WTC11 (cell line): ENCODE measurements at regions of chr5 and their contacts with region 1.

Region 1: GRCh38 chr5:139774980-139775661 is 20.5 kb upstream of the PSD2 start:
- DNase-seq: peak; percentile 97
- ATAC-seq: peak; percentile 97
- H3K4me3 Mint-ChIP-seq: peak overlapping the region; percentile 34; the same call in 1 of the 2 replicates
- H3K27ac Mint-ChIP-seq: no peak overlapping the region
- H3K4me1 Mint-ChIP-seq: peaks cover 11% of the 10 kb centered on the region; the same call in 1 of the 2 replicates
- H3K27me3 Mint-ChIP-seq: peaks cover 28% of the 10 kb centered on the region
- CTCF ChIP-seq: peak; percentile 98

Region 2: GRCh38 chr5:139690064-139690802 is 84.9 kb before region 1 on chr5:
- CTCF ChIA-PET with region 1: interaction called, 15 read pairs
- POLR2A ChIA-PET with region 1: no interaction called
- DNase-seq: no peak
- ATAC-seq: peak; percentile 11
- H3K4me3 Mint-ChIP-seq: peak overlapping the region; percentile 24; the same call in 1 of the 2 replicates
- H3K27ac Mint-ChIP-seq: peak overlapping the region; percentile 19; the same call in 1 of the 2 replicates
- H3K4me1 Mint-ChIP-seq: peaks cover 63% of the 10 kb centered on the region
- H3K27me3 Mint-ChIP-seq: peaks cover 24% of the 10 kb centered on the region
- CTCF ChIP-seq: no peak

Region 3: DNA sequence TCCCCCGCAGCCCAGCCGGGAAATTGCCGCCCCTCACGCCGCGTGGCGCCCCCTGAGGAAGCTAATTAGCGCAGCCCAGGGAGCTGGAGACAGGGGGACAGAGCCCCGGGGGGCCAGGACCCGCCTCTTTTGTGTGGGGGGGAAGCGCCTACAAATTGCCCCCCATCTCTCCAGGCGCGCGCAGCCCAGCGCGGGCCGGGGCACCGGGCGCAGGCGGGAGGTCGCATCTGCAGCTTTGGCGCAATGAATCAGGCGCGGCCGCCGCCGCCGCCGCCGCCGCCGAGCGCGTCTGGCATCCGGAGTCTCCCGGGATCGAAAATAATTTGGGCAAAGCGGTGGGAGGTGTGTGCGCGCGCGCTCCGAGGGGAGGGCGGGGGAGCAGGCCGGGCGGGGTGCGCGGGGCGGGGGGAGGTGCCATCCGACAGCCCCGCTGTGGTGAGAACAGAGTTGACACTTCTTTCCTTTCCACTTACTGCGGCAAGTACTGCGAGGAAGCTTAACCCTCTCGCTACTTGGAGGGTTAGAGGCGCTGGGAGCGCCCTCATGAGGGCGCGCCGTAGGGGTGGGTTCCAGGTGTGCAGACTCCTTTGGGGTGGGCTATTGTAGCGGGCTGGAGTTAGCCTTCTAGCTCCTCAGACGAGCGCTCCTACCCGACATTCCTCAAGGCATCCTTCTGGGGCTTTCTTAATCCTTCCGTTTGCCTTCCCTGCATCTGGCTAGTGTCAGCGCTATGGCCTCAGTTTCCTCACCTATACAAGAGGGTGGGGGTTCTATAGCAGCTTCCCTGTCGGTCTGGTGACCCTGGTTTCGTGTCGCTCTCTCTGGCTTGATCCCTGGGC is 63.8 kb before region 1 on chr5:
- CTCF ChIA-PET with region 1: interaction called, 40 read pairs
- POLR2A ChIA-PET with region 1: interaction called, 3 read pairs
- DNase-seq: peak; percentile 75
- ATAC-seq: peak; percentile 10
- H3K4me3 Mint-ChIP-seq: peak overlapping the region; percentile 71
- H3K27ac Mint-ChIP-seq: peak overlapping the region; percentile 45
- H3K4me1 Mint-ChIP-seq: peaks cover 37% of the 10 kb centered on the region
- H3K27me3 Mint-ChIP-seq: peaks cover 7% of the 10 kb centered on the region
- CTCF ChIP-seq: no peak

Region 4: GRCh38 chr5:139755892-139756671 is 19.0 kb before region 1 on chr5:
- CTCF ChIA-PET with region 1: interaction called, 11 read pairs
- POLR2A ChIA-PET with region 1: no interaction called
- DNase-seq: peak; percentile 66
- ATAC-seq: peak; percentile 55
- H3K4me3 Mint-ChIP-seq: peak overlapping the region; percentile 70
- H3K27ac Mint-ChIP-seq: no peak overlapping the region
- H3K4me1 Mint-ChIP-seq: peaks cover 40% of the 10 kb centered on the region
- H3K27me3 Mint-ChIP-seq: peaks cover 91% of the 10 kb centered on the region
- CTCF ChIP-seq: no peak

Region 5: DNA sequence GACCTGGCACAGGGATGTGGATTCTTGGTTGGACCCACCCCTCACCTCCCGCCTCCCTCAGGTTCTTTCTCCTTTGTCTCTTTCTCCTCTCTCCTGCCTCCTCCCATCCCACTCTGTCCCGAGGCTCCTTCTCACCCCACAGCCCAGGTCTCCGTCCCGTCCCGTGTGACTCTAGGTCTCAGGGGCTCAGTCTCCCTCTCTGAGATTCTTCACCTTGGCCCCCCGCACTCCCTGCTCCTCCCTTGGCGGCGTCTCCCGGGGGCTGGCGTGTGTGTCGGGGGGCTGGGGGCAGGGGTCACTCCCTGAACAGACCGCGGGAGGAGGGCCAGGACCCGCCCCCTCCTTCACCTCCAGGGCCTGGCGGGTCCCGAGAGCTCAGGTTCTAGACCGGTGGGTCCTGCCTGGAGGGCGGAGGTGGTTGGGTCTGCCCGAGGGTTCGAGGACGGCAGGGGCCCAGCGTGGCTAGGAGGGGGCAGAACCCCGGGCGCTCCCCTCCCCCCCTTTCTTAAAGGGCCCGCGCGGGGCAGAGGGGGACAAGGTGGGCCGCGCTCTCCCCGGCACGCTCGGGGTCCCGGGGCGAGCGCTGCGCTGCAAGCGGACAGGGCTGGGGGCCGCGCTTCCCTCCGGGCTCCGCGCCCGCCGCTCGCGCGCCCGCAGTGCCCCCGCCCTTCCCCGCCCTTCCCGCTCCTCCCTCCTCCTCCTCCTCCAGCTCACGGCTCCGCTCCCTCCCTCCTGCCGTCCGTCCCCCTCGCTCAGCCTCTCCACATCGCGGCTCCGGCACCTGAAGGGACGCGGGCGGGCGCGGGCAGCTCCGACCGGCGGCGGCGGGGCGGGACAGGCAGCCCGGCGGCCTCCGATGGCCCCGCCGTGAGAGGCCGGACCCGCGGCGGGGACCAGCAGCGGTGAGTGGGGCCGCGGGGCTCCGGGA is 20.2 kb after region 1 on chr5 and contains the start of gene PSD2:
- CTCF ChIA-PET with region 1: interaction called, 21 read pairs
- POLR2A ChIA-PET with region 1: no interaction called
- DNase-seq: peak; percentile 61
- ATAC-seq: peak; percentile 45
- H3K4me3 Mint-ChIP-seq: peak within 1 kb of the TSS; percentile 67
- H3K27ac Mint-ChIP-seq: no peak within 1 kb of the TSS
- H3K4me1 Mint-ChIP-seq: peaks cover 5% of the 10 kb centered on the region; the same call in 1 of the 2 replicates
- H3K27me3 Mint-ChIP-seq: peaks cover 89% of the 10 kb centered on the region
- CTCF ChIP-seq: no peak
- total RNA-seq, gene PSD2: 0.55 to 0.57 TPM (median 0.57 TPM) in 3 replicates

Region 6: GRCh38 chr5:139822553-139823425 is 47.7 kb after region 1 on chr5:
- CTCF ChIA-PET with region 1: no interaction called
- POLR2A ChIA-PET with region 1: no interaction called
- DNase-seq: peak; percentile 23
- ATAC-seq: peak; percentile 46
- H3K4me3 Mint-ChIP-seq: no peak overlapping the region
- H3K27ac Mint-ChIP-seq: no peak overlapping the region
- H3K4me1 Mint-ChIP-seq: 0 out of 2 replicates have a peak, but pooled peaks cover 3% of the 10 kb centered on the region
- H3K27me3 Mint-ChIP-seq: peaks cover 10% of the 10 kb centered on the region
- CTCF ChIP-seq: no peak

Region 7: DNA sequence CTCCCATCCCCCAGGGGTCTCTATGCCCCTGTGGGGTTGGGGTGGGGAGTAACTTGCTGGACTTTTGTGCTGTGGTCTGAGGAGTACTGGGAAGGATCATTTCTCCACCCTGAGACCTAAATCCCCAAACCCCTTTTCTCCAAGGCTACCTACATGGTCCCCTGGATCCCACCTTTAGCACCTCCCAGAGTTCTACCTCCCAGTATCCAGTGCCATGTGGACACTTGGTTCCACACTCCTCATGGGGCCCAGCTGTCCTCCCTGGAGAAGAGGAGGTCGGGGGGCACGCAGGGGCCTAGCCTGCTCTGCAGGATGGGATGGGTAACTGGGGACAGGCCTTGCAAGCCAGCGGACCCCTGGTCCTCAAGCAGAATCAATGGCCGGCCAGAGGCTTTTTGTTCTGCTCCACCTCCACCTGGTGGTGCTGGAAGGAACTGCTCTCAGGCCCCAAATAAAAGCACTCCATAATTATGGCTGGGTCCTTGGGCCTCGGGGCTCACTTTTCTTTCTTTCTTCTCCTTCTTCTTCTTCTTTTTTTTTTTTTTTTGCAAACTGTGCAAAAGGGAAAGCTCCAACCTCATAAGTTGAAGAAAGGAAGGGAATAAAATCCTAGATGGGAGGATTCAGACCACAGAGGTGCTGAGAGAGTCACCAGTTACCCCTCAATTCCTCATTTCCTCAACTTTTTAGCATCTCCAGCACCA is 88.9 kb after region 1 on chr5:
- CTCF ChIA-PET with region 1: interaction called, 20 read pairs
- POLR2A ChIA-PET with region 1: no interaction called
- DNase-seq: peak; percentile 81
- ATAC-seq: peak; percentile 84
- H3K4me3 Mint-ChIP-seq: no peak overlapping the region
- H3K27ac Mint-ChIP-seq: no peak overlapping the region
- H3K4me1 Mint-ChIP-seq: peaks cover 12% of the 10 kb centered on the region
- H3K27me3 Mint-ChIP-seq: peaks cover 6% of the 10 kb centered on the region
- CTCF ChIP-seq: peak; percentile 89